PC-9 (cell line): ENCODE measurements at regions of chr12 and their contacts with region 1.

Region 1: GRCh38 chr12:20601668-20602280 is 93.4 kb upstream of the SLCO1C1 start:
- DNase-seq: no peak
- H3K4me3 ChIP-seq: no peak overlapping the region
- H3K27ac ChIP-seq: no peak overlapping the region
- H3K4me1 ChIP-seq: no peaks in the 10 kb centered on the region
- H3K27me3 ChIP-seq: no peaks in the 10 kb centered on the region
- CTCF ChIP-seq: peak; percentile 60

Region 2: GRCh38 chr12:19739183-19739776 is 862.5 kb before region 1 on chr12:
- CTCF ChIA-PET with region 1: no interaction called
- POLR2A ChIA-PET with region 1: no interaction called
- intact Hi-C with region 1: loop called (anchors 5 kb)
- DNase-seq: peak; percentile 23 to 36
- H3K4me3 ChIP-seq: no peak overlapping the region
- H3K27ac ChIP-seq: no peak overlapping the region
- H3K4me1 ChIP-seq: no peaks in the 10 kb centered on the region
- H3K27me3 ChIP-seq: no peaks in the 10 kb centered on the region
- CTCF ChIP-seq: peak; percentile 76

Region 3: GRCh38 chr12:19915392-19916195 is 686.2 kb before region 1 on chr12:
- CTCF ChIA-PET with region 1: no interaction called
- POLR2A ChIA-PET with region 1: no interaction called
- intact Hi-C with region 1: loop called (anchors 10 kb)
- DNase-seq: no peak
- H3K4me3 ChIP-seq: no peak overlapping the region
- H3K27ac ChIP-seq: no peak overlapping the region
- H3K4me1 ChIP-seq: no peaks in the 10 kb centered on the region
- H3K27me3 ChIP-seq: no peaks in the 10 kb centered on the region
- CTCF ChIP-seq: peak; percentile 59

Region 4: DNA sequence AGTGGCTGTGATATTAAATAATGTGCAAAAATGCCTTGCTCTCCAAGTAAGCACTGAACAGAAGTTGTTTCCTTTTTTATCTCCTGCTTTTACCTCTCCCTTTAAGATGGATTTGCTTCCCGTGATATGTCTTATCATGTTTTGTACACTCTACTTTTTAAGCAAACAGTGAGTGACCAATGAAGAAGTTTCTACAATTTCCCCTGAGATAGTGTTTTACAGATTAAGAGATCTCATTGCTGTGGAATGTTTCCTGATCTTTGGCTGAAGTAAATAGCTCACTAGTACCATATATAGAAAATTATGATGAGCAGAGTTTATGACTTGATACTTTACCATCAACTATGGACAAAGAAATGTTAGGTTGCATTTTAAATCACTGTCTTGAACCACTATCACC is 418.2 kb before region 1 on chr12:
- CTCF ChIA-PET with region 1: no interaction called
- POLR2A ChIA-PET with region 1: no interaction called
- intact Hi-C with region 1: no loop called
- DNase-seq: no peak
- H3K4me3 ChIP-seq: no peak overlapping the region
- H3K27ac ChIP-seq: no peak overlapping the region
- H3K4me1 ChIP-seq: no peaks in the 10 kb centered on the region
- H3K27me3 ChIP-seq: no peaks in the 10 kb centered on the region
- CTCF ChIP-seq: no peak; the same call in 1 of the 2 replicates

Region 5: DNA sequence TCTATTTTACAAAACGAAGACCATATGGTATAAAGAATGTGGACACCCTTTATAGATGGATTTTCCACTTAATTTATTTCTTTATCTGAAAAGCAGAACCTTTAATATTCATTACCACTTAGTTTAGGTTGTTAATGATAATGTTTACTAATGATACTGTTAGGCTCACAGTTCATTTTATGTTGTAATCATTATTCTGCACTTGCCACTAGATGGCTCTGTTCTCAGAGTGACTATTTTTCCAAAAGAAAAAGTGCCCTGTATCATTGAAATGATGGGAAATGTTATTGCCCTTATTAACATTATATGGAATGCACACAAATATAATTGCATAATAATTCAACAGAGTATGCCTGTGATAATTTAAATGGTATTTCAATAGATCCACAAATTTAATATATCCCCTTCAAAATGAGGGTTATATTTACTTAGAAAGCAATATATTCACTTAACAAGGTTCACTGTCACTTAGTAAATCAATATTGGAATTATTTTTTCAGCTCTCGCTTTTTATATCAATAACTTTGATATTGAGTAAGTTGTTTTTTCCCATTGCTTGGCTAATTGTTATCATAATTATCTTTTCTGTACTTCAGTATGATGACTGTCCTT is 137.8 kb before region 1 on chr12:
- CTCF ChIA-PET with region 1: no interaction called
- POLR2A ChIA-PET with region 1: no interaction called
- intact Hi-C with region 1: loop called (anchors 1 kb)
- DNase-seq: no peak
- H3K4me3 ChIP-seq: no peak overlapping the region
- H3K27ac ChIP-seq: no peak overlapping the region
- H3K4me1 ChIP-seq: no peaks in the 10 kb centered on the region
- H3K27me3 ChIP-seq: no peaks in the 10 kb centered on the region
- CTCF ChIP-seq: peak; percentile 68

Region 6: DNA sequence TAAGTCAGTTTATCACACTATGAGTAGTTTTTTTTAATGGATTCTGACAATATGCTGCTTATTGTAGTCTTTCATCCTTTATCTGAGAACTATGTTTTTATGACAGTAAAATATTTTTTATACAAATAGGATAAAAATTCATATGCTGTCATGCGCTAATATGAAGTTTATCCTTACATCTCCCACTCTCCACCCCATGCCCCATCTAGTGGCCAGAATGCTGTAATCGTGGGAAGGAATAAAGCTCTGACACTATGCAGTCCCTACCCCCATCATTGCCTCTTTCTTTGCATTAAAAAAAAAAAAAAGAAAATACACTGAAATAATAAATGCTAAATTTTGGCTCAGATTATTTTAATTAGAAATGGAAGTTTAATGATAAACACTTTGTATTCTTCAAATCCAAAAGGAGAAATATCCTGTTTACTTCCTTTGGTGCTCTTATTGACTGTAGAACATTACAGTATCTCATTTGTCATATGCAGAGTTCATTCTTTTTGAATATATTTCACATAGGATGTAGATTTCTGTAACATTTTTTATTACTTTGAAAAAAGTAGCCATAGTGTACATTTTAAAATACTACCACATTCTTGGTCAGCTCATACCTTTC is 52.6 kb before region 1 on chr12:
- CTCF ChIA-PET with region 1: no interaction called
- POLR2A ChIA-PET with region 1: no interaction called
- intact Hi-C with region 1: no loop called
- DNase-seq: peak in 1 of 2 experiments; percentile 5
- H3K4me3 ChIP-seq: no peak overlapping the region
- H3K27ac ChIP-seq: no peak overlapping the region
- H3K4me1 ChIP-seq: no peaks in the 10 kb centered on the region
- H3K27me3 ChIP-seq: no peaks in the 10 kb centered on the region
- CTCF ChIP-seq: peak; percentile 46; the same call in 1 of the 2 replicates